Right ventricle myocardium inferior (tissue), 1 donor: ENCODE measurements at regions of chr11 and their contacts with region 1.

Region 1: GRCh38 chr11:124897674-124898262 is at the start of gene ROBO4:
- DNase-seq: no peak
- ATAC-seq: peak; percentile 40
- total RNA-seq, gene ROBO4: 27.6 TPM

Region 2: GRCh38 chr11:124920870-124921609 is 23.3 kb after region 1 on chr11:
- intact Hi-C with region 1: loop called (anchors 1 kb)
- DNase-seq: peak; percentile 82
- ATAC-seq: peak; percentile 64

Region 3: GRCh38 chr11:125201525-125202141 is 303.9 kb after region 1 on chr11:
- intact Hi-C with region 1: no loop called
- DNase-seq: no peak
- ATAC-seq: no peak